Spleen (tissue), 13 donors: ENCODE measurements at regions of chr11 and their contacts with region 1.

Region 1: DNA sequence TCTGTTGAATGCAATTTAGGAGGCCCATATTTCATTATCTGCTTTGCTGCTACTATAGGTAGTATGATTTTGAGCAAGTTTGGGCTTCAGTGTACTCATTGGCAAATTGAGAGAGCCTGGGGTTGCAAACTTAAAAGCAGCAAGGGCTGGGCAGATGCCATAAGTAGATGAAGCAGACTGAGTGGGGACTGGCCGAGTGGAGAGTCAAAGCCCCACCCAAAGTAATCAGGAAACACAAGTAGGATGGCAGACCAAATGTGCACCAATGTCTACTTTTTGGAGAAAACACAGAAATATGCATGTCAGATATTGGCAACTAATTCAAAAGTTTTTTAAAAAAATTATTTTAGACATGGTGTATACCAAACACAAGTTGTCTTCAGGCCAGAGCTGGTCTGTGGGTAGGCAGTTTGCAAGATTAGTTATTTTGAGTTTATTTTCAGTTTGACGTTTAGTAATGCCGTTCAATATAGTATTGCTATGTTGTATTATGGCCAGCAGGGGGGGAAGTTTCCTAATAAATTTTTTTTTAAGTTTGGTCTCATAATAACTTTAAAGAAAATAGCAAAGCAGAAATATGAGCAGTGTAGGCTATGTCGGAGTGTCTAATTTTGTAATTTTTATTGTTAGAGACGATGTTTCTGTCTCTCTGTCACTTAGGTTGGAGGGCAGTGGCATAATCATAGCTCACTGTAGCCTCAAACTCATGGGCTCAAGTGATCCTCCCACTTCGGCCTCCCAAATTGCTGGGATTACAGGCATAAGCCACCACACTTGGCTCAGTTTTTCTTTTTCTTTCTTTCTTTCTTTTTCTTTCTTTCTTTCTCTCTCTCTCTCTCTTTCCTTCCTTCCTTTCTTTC is 105.1 kb downstream of the HIPK3 start:
- DNase-seq: no peak
- H3K4me3 ChIP-seq: no peak overlapping the region
- H3K27ac ChIP-seq: no peak overlapping the region
- H3K4me1 ChIP-seq: peaks cover 0 to 5% (median 4%) of the 10 kb centered on the region in 6 donors
- H3K27me3 ChIP-seq: no peaks in the 10 kb centered on the region
- CTCF ChIP-seq: peak; percentile 34 to 86 (median 76)
- POLR2A ChIP-seq: no peak

Region 2: GRCh38 chr11:32960553-32961164 is 401.6 kb before region 1 on chr11:
- intact Hi-C with region 1: loop called (anchors 10 kb)
- DNase-seq: no peak
- H3K4me3 ChIP-seq: no peak overlapping the region
- H3K27ac ChIP-seq: no peak overlapping the region
- H3K4me1 ChIP-seq: no peaks in the 10 kb centered on the region
- H3K27me3 ChIP-seq: no peaks in the 10 kb centered on the region
- CTCF ChIP-seq: peak; percentile 40 to 78 (median 67)
- POLR2A ChIP-seq: no peak

Region 3: DNA sequence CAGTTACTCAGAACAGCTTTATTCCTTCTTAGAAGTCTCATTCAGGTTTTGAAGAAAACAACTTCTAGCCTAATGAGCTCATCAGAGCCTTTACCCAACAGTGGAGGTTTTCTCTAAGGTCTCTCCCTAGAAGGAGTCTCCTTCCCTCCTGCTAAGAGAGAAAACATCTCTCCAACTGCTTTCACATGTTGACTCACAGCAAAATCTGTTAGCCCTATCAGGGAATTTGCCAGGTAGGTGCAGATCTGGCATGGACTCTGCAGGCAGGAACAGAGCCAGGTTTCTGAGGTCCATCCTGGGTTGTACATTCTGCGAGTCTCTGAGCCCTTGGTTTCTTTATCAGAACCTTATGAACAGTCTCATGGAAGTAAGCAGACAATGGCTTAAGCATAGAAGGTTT is 109.3 kb after region 1 on chr11:
- intact Hi-C with region 1: no loop called
- DNase-seq: no peak
- H3K4me3 ChIP-seq: no peak overlapping the region
- H3K27ac ChIP-seq: no peak overlapping the region
- H3K4me1 ChIP-seq: no peaks in the 10 kb centered on the region
- H3K27me3 ChIP-seq: peaks cover 0 to 11% (median 0%) of the 10 kb centered on the region in 7 donors
- CTCF ChIP-seq: no peak
- POLR2A ChIP-seq: no peak

Region 4: GRCh38 chr11:33687733-33688479 is 325.6 kb after region 1 on chr11:
- intact Hi-C with region 1: loop called (anchors 5 kb)
- DNase-seq: no peak
- H3K4me3 ChIP-seq: no peak overlapping the region
- H3K27ac ChIP-seq: no peak overlapping the region
- H3K4me1 ChIP-seq: peaks cover 0 to 36% (median 9%) of the 10 kb centered on the region in 6 donors
- H3K27me3 ChIP-seq: peaks cover 0 to 23% (median 0%) of the 10 kb centered on the region in 7 donors
- CTCF ChIP-seq: peak in 8 of 11 experiments; percentile 19 to 54 (median 44)
- POLR2A ChIP-seq: no peak

Region 5: GRCh38 chr11:33742249-33742851 is 380.1 kb after region 1 on chr11:
- intact Hi-C with region 1: loop called (anchors 5 kb)
- DNase-seq: no peak
- H3K4me3 ChIP-seq: no peak overlapping the region
- H3K27ac ChIP-seq: no peak overlapping the region
- H3K4me1 ChIP-seq: peaks cover 0 to 4% (median 0%) of the 10 kb centered on the region in 6 donors
- H3K27me3 ChIP-seq: no peaks in the 10 kb centered on the region
- CTCF ChIP-seq: peak; percentile 17 to 64 (median 52)
- POLR2A ChIP-seq: no peak

Region 6: DNA sequence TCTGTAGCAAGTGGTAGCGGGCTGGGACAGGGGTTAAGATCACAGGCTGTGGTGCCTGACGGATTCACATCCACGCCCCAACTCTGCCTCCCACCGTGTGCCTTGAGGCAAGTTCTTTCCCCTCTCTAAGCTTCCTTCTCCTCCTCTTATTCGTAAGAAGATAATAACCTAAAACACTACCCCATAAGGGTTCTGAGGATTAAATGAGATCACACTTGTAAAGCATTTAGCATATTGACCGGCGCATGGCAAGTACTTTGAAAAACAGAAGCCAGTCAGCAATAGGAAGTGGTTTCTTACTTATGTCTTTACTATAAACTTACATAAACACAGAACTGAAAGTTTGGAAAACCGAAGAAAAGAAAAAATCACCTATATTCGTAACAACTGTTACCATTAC is 545.1 kb after region 1 on chr11:
- intact Hi-C with region 1: no loop called
- DNase-seq: no peak
- H3K4me3 ChIP-seq: no peak overlapping the region
- H3K27ac ChIP-seq: peak overlapping the region in 4 of 8 donors; percentile 9 to 59 (median 21)
- H3K4me1 ChIP-seq: peaks cover 0 to 60% (median 26%) of the 10 kb centered on the region in 6 donors
- H3K27me3 ChIP-seq: no peaks in the 10 kb centered on the region
- CTCF ChIP-seq: no peak
- POLR2A ChIP-seq: no peak